K562 (cell line): ENCODE measurements at regions of chr2 and their contacts with region 1.

Region 1: GRCh38 chr2:58448065-58448507 is 207.0 kb upstream of the FANCL start:
- DNase-seq: peak in 3 of 4 experiments; percentile 13 to 74 (median 38)
- ATAC-seq: peak; percentile 97
- H3K4me3 ChIP-seq: no peak overlapping the region
- H3K27ac ChIP-seq: no peak overlapping the region
- H3K4me1 ChIP-seq: no peaks in the 10 kb centered on the region
- H3K27me3 ChIP-seq: no peaks in the 10 kb centered on the region
- CTCF ChIP-seq: peak; percentile 67 to 81 (median 75)
- EP300 ChIP-seq: no peak
- POLR2A ChIP-seq: no peak
- RAD21 ChIP-seq: peak; percentile 65 to 79

Region 2: DNA sequence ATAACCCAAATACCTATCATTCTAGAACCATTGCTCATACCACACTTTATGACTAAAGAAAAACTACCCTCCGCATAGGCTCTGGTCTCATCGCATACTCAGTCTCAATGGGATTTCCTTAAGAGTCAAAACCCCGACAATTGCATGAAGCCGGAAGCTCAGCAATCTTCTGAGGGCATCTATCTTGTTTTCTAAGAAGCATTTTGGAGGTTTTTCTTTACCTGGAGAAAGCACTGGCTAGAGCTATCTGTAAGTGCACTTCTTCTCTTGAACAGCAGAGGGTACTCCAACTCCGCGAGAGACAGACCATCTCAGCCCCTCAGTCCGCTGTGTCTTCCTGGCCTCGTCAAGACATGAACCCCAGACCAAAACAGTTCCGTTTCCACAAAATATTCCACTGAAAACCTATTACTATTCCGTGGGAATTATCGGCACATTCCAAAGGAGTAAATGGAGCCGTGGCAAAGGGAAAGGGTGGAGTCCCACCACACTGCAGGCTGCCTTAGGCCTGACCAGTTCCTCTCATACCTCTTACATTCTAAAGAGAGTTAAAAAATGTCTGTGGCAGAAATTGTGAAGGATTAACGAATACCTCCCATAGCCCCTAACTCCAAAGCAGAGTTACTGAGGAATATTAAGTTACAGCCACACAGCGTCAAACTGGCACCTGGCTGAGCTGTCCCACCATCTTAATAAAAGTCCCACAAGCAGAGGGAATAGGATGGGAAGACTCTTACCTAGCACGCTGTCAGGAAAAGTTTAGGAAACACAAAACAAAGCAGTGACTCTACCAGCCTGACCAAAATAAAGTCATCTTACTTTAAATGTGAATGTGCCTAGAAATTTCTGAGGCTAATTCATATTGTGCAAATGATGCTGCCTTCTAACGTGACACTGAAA is 727.1 kb before region 1 on chr2:
- CTCF ChIA-PET with region 1: no interaction called
- POLR2A ChIA-PET with region 1: no interaction called
- in situ Hi-C with region 1: no loop called
- intact Hi-C with region 1: loop called (anchors 5 kb)
- DNase-seq: peak; percentile 45 to 72 (median 52)
- ATAC-seq: peak; percentile 100
- H3K4me3 ChIP-seq: no peak overlapping the region
- H3K27ac ChIP-seq: no peak overlapping the region
- H3K4me1 ChIP-seq: no peaks in the 10 kb centered on the region
- H3K27me3 ChIP-seq: no peaks in the 10 kb centered on the region
- CTCF ChIP-seq: peak; percentile 63 to 83 (median 73)
- EP300 ChIP-seq: no peak
- POLR2A ChIP-seq: no peak
- RAD21 ChIP-seq: peak; percentile 55 to 76

Region 3: DNA sequence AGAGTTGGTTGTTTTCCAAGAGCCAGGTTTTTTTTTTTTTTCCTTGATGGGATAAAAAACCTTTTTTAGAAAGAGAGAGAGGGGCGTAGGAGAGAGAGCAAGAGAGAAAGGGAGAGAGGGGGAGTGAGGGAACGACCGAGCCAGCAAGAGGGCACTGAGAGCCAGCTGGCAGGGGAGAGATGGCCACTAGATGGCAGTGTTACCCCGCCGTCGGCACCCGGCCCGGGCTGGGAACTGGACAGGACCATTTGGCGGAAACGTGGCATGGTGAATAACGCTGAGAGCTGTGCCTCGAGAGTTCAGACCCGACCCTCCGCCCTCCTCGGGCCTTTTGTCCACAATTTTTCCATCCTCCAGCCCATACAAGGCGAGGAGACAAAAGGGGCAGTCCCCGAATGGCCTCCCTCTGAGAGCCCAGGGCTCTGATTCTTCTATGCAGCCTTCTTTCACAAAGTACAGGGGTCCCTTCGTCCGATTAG is 688.2 kb before region 1 on chr2:
- CTCF ChIA-PET with region 1: interaction called, 6 read pairs
- POLR2A ChIA-PET with region 1: no interaction called
- in situ Hi-C with region 1: no loop called
- intact Hi-C with region 1: loop called (anchors 1 kb)
- DNase-seq: peak; percentile 80 to 85 (median 83)
- ATAC-seq: peak; percentile 99
- H3K4me3 ChIP-seq: no peak overlapping the region
- H3K27ac ChIP-seq: no peak overlapping the region
- H3K4me1 ChIP-seq: peaks cover 0 to 4% of the 10 kb centered on the region in 2 experiments; a peak in 3 of 5 replicates
- H3K27me3 ChIP-seq: no peaks in the 10 kb centered on the region
- CTCF ChIP-seq: peak; percentile 88 to 92 (median 90)
- EP300 ChIP-seq: no peak
- POLR2A ChIP-seq: no peak
- RAD21 ChIP-seq: peak; percentile 82 to 90

Region 4: DNA sequence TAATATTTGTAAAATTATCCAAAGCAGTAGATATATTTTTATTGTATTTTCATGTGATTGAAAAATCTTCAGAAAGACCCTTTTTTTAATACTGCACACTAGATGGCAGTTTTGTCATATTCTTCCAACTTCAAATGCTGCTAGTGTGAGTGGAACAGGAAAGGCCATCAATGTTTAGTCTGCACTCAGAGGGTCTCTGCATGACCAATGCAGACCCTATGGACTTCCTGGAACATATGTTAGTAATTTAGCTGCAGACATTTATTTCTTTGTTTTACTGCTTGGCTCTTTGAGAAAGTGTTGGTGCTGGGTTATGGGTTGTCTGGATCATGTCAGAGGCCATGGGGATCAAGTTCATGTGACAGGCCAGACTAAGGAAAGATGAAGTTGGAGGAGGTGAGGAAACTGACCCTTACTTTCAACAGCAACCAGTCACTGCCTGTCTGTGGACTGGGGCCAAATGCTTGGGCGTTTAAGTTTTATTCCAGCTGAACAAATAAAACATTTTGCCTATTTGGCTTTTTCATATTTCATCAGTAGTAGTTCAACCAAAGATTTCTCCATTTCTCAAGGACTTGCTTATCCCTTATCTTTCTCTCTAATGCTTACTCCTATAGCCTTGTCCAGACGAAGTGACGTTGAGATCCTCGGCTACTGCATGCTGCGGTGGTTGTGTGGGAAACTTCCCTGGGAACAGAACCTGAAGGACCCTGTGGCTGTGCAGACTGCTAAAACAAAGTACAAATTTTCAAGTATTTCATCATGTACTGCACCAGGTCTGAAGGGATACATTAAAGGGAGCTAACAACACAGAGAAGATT is 316.7 kb before region 1 on chr2:
- CTCF ChIA-PET with region 1: interaction called, 4 read pairs
- POLR2A ChIA-PET with region 1: no interaction called
- in situ Hi-C with region 1: no loop called
- intact Hi-C with region 1: loop called (anchors 5 kb)
- DNase-seq: no peak
- ATAC-seq: no peak
- H3K4me3 ChIP-seq: no peak overlapping the region
- H3K27ac ChIP-seq: no peak overlapping the region
- H3K4me1 ChIP-seq: no peaks in the 10 kb centered on the region
- H3K27me3 ChIP-seq: no peaks in the 10 kb centered on the region
- CTCF ChIP-seq: peak in 1 of 3 experiments; percentile 28; a peak in 1 of 6 replicates
- EP300 ChIP-seq: no peak
- POLR2A ChIP-seq: no peak
- RAD21 ChIP-seq: peak in 1 of 2 experiments; percentile 35; a peak in 2 of 4 replicates